Activated CD4-positive, alpha-beta memory T cell treated with anti-CD3 and anti-CD28 coated beads for 36 hours (primary cell): ENCODE measurements at regions of chr12 and their contacts with region 1.

Region 1: GRCh38 chr12:113358381-113359132 is at the start of gene PLBD2:
- DNase-seq: peak; percentile 97
- H3K4me3 Mint-ChIP-seq: peak within 1 kb of the TSS; percentile 82
- H3K27ac Mint-ChIP-seq: peak within 1 kb of the TSS; percentile 88
- H3K4me1 Mint-ChIP-seq: peaks cover 13% of the 10 kb centered on the region
- H3K27me3 Mint-ChIP-seq: no peaks in the 10 kb centered on the region
- total RNA-seq, gene PLBD2: 18.3 to 18.8 TPM

Region 2: GRCh38 chr12:112978163-112979040 is 380.2 kb before region 1 on chr12 and contains the start of gene OAS2:
- CTCF ChIA-PET with region 1: no interaction called
- POLR2A ChIA-PET with region 1: no interaction called
- intact Hi-C with region 1: loop called (anchors 2 kb)
- DNase-seq: peak; percentile 91
- H3K4me3 Mint-ChIP-seq: peak within 1 kb of the TSS; percentile 81
- H3K27ac Mint-ChIP-seq: peak within 1 kb of the TSS; percentile 100
- H3K4me1 Mint-ChIP-seq: peaks cover 24% of the 10 kb centered on the region
- H3K27me3 Mint-ChIP-seq: no peaks in the 10 kb centered on the region
- total RNA-seq, gene OAS2: 140 to 148 TPM

Region 3: GRCh38 chr12:113184900-113185773 is 173.4 kb before region 1 on chr12 and contains the starts of genes DDX54 and RITA1:
- CTCF ChIA-PET with region 1: no interaction called
- POLR2A ChIA-PET with region 1: no interaction called
- intact Hi-C with region 1: loop called (anchors 2 kb)
- DNase-seq: peak; percentile 93
- H3K4me3 Mint-ChIP-seq: peak within 1 kb of the TSS; percentile 94
- H3K27ac Mint-ChIP-seq: peak within 1 kb of the TSS; percentile 93
- H3K4me1 Mint-ChIP-seq: peaks cover 24% of the 10 kb centered on the region
- H3K27me3 Mint-ChIP-seq: no peaks in the 10 kb centered on the region
- total RNA-seq, gene DDX54: 107 to 109 TPM
- total RNA-seq, gene RITA1: 18.7 to 22.0 TPM

Region 4: GRCh38 chr12:113208041-113208934 is 150.3 kb before region 1 on chr12:
- CTCF ChIA-PET with region 1: no interaction called
- POLR2A ChIA-PET with region 1: no interaction called
- intact Hi-C with region 1: loop called (anchors 1 kb)
- DNase-seq: peak; percentile 86
- H3K4me3 Mint-ChIP-seq: peak overlapping the region; percentile 38
- H3K27ac Mint-ChIP-seq: peak overlapping the region; percentile 91
- H3K4me1 Mint-ChIP-seq: peaks cover 50% of the 10 kb centered on the region
- H3K27me3 Mint-ChIP-seq: no peaks in the 10 kb centered on the region

Region 5: DNA sequence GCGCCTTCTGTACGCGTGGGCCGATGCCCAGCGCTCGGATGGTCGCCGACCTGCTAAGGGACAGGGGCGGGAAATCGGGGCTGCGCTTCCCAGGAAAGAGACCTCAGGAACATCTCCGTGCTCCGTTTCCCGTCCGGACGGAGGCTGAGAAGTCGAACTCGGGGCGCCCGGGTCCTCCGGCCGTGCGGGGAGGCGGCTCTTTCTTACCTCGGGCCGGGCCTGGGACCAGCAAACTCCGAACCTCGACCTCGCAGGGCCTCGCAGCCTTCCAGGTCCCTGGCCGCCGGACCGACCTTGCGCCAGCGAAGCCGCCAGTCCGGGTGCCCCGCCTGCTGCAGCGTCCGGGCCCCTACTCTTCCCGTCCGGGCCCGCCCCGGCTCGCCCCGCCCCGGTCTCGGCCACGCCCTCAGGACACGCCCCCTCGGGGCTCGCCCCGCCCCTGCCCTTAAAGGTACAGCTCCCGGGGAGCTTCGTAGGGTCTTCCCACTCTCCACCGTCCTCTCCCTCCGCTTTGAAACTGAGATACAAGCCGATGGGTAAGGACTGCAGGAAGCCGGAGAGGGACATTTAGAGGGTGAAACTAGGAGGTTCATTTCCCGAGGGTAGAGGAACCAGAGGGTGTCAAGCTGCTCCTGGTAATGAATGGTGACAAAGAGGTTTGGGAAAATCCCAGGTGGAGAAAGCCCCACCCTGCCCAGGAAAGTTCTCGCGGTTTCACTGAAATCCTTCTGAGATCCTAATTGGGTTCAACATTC is 23.6 kb before region 1 on chr12 and contains the start of gene SLC8B1:
- CTCF ChIA-PET with region 1: interaction called, 3 read pairs
- POLR2A ChIA-PET with region 1: interaction called, 7 read pairs
- intact Hi-C with region 1: loop called (anchors 1 kb)
- DNase-seq: peak; percentile 93
- H3K4me3 Mint-ChIP-seq: peak within 1 kb of the TSS; percentile 97
- H3K27ac Mint-ChIP-seq: peak within 1 kb of the TSS; percentile 75
- H3K4me1 Mint-ChIP-seq: peaks cover 26% of the 10 kb centered on the region
- H3K27me3 Mint-ChIP-seq: no peaks in the 10 kb centered on the region
- total RNA-seq, gene SLC8B1: 21.5 to 22.0 TPM

Region 6: DNA sequence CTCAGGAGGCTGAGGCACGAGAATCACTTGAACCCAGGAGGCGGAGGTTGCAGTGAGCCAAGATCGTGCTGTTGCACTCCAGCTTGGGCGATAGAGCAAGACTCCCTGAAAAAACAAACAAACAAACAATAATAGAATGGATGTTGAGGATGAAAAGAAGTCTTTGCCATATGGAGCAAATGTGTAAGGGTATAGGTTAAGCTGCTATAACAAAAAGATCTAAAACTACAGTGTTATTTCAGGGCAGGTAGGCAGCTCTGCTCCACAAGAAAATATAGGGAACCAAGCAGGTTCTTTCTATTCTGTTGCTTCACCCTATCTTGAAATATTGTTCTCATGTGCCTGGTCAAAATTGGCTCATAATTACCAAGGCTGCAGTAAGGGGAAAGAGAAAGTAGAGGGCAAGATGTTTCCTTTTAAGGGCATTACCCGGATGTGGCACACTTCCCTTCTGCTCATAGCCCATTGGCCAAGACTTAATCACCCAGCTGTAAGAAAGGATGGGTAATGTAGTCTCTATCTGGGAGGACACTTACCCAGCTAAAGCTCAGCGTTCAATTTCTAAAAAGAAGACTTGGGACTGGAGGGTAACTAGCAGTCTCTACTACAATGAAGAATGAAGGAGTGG is 87.1 kb after region 1 on chr12:
- CTCF ChIA-PET with region 1: no interaction called
- POLR2A ChIA-PET with region 1: no interaction called
- intact Hi-C with region 1: no loop called
- DNase-seq: no peak
- H3K4me3 Mint-ChIP-seq: no peak overlapping the region
- H3K27ac Mint-ChIP-seq: no peak overlapping the region
- H3K4me1 Mint-ChIP-seq: no peaks in the 10 kb centered on the region
- H3K27me3 Mint-ChIP-seq: peaks cover 16% of the 10 kb centered on the region

Region 7: DNA sequence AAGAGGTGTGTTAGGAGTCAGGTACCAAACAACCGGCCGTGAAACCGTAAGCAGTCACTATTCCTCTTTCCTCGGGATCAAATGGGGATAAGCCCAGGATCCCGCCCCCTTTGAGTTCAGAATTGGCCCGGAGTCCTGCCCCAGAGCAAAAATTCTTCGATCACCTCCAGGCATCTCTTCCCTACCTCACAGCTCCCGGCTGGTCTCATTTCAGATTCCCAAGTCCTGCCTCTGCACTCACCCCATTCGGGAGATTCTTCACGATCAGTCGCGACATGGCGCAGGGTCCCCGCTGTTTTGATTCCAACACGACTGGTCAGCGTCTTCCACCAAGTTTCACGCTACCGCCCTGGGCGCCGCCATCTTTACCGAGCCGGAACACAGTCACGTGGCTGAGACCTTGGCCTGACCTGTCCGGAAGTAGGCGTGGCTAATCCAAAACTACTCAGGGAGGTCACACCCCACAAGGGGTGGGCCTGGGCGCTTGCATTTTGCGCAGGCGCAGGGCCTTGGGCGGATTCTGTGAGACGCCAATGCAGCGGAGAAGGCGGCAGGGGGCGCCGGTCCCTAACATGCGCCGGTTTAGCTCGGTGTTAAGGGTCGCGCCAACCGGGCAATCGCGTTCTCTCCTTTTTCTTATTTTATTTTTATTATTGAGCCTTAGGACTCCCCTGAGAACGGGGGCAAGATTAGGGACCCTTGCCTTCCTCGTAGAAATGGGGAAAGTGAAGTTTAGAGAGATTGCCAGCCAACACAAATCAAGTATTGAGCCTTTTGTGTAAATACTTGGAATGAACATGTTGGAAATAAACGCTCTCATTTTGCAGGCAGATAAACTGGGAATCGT is 607.6 kb after region 1 on chr12 and contains the start of gene RBM19:
- CTCF ChIA-PET with region 1: no interaction called
- POLR2A ChIA-PET with region 1: no interaction called
- intact Hi-C with region 1: loop called (anchors 1 kb)
- DNase-seq: peak; percentile 98
- H3K4me3 Mint-ChIP-seq: peak within 1 kb of the TSS; percentile 100
- H3K27ac Mint-ChIP-seq: peak within 1 kb of the TSS; percentile 92
- H3K4me1 Mint-ChIP-seq: peaks cover 53% of the 10 kb centered on the region
- H3K27me3 Mint-ChIP-seq: no peaks in the 10 kb centered on the region
- total RNA-seq, gene RBM19: 69.6 to 74.1 TPM